ENCODE measurements at regions of chr13 and their contacts with region 1.

Region 1: DNA sequence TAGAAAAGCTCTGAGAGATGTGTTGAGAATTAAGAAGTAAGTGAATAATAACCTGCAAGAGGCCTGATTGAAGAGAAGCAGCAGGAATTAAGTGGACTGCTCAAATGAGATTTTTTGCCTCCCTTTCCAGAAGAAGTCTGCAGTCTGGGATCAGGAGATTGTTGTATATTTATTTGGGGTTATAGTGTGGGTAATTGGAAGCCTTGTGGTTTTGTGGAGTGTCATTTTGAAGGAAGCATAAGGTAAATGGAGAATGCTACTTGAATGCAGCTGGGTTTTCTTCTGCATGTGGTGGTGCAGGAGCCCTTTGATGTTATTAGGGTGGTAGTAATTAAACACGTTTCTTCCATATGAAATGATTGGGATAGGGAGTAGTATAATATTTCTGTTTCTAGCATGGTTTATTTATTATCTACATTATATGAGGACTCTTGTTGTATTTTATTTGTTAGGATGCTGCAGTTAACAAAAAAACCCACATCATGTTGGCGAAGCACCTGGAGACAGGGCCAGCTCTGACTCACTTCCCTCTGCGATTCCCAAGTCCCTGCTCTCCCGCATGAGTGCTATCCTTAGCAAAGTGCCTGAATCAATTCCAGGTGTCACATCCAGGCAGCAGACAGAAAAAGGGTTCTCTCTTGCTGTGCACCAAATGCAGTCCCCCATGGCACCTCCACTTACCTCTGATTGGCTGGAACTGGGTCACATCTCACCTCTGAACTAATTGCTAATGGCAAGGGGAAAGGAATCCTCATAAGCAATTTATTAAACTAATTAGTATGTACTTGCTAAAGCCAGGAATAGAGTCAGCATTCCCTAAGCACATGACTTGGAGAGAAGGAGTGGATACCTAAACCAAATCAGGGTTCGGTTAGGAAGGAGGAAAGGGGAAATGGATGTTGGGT is 54.8 kb downstream of the DGKH start:
- DNase-seq: no peak
- ATAC-seq: no peak
- H3K4me3 ChIP-seq: no peak overlapping the region
- H3K4me3 Mint-ChIP-seq: no peak overlapping the region
- H3K27ac ChIP-seq: no peak overlapping the region
- H3K27ac Mint-ChIP-seq: no peak overlapping the region
- H3K4me1 ChIP-seq: no peaks in the 10 kb centered on the region
- H3K4me1 Mint-ChIP-seq: peaks cover 10% of the 10 kb centered on the region
- H3K27me3 ChIP-seq: no peaks in the 10 kb centered on the region
- H3K27me3 Mint-ChIP-seq: no peaks in the 10 kb centered on the region
- CTCF ChIP-seq: no peak

Region 2: DNA sequence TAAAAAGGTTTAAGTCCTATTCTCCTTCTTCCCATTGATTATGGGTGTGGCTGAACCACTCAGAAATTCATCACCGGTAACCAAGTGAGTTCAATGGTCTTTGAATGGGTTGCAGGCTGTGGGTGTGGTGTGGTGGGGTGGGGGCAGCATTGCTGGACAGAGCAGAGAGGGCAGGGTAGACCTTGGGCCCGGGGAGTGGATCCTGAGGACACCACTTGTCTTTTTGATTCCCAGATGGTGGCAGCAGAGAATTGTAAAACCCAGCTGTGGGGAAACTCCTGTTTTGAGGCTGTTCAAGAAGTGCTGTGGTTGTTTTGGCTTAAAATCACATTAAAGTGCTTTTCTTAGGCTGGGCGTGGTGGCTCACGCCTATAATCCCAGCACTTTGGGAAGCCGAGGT is 691.7 kb before region 1 on chr13:
- CTCF ChIA-PET with region 1: no interaction called
- POLR2A ChIA-PET with region 1: no interaction called
- intact Hi-C with region 1: loop called in 1 of 2 experiments (anchors 10 kb)
- DNase-seq: peak in 4 of 9 experiments; percentile 17 to 66 (median 38)
- ATAC-seq: no peak
- H3K4me3 ChIP-seq: no peak overlapping the region
- H3K4me3 Mint-ChIP-seq: no peak overlapping the region
- H3K27ac ChIP-seq: no peak overlapping the region
- H3K27ac Mint-ChIP-seq: no peak overlapping the region
- H3K4me1 ChIP-seq: no peaks in the 10 kb centered on the region
- H3K4me1 Mint-ChIP-seq: peaks cover 3% of the 10 kb centered on the region
- H3K27me3 ChIP-seq: no peaks in the 10 kb centered on the region
- H3K27me3 Mint-ChIP-seq: no peaks in the 10 kb centered on the region
- CTCF ChIP-seq: no peak

Region 3: GRCh38 chr13:42119875-42120274 is 16.7 kb after region 1 on chr13:
- CTCF ChIA-PET with region 1: no interaction called
- POLR2A ChIA-PET with region 1: no interaction called
- intact Hi-C with region 1: no loop called
- DNase-seq: no peak
- ATAC-seq: no peak
- H3K4me3 ChIP-seq: no peak overlapping the region
- H3K4me3 Mint-ChIP-seq: no peak overlapping the region
- H3K27ac ChIP-seq: no peak overlapping the region
- H3K27ac Mint-ChIP-seq: no peak overlapping the region
- H3K4me1 ChIP-seq: no peaks in the 10 kb centered on the region
- H3K4me1 Mint-ChIP-seq: no peaks in the 10 kb centered on the region
- H3K27me3 ChIP-seq: no peaks in the 10 kb centered on the region
- H3K27me3 Mint-ChIP-seq: no peaks in the 10 kb centered on the region
- CTCF ChIP-seq: no peak